ENCODE measurements at regions of chr13 and their contacts with region 1.

Region 1: DNA sequence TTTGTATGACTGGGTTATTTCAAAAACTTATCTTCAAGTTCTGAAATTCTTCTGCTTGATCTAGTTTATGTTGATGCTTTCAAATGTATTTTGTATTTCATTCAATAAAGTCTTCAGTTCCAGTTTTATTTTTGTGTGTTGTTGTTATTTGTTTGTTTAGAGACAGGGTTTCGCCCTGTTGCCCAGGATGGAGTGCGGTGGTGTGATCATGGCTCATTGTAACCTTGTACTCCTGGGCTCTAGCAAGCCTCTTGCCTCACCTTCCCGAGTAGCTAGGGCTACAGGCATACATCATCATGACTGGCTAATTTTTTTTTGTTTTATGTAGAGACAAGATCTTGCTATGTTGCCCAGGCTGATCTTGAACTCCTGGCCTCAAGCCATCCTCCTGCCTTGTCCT is 40.3 kb upstream of the ARHGEF7 start:
- DNase-seq: no peak
- H3K4me3 ChIP-seq: no peak overlapping the region
- H3K27ac ChIP-seq: no peak overlapping the region
- H3K4me1 ChIP-seq: no peaks in the 10 kb centered on the region
- H3K27me3 ChIP-seq: no peaks in the 10 kb centered on the region
- CTCF ChIP-seq: no peak
- POLR2A ChIP-seq: no peak

Region 2: GRCh38 chr13:111219950-111220349 is 145.1 kb after region 1 on chr13:
- intact Hi-C with region 1: loop called (anchors 5 kb)
- DNase-seq: no peak
- H3K4me3 ChIP-seq: no peak overlapping the region
- H3K27ac ChIP-seq: peak overlapping the region in 4 of 8 donors; percentile 4 to 37 (median 11)
- H3K4me1 ChIP-seq: peaks cover 25 to 88% (median 52%) of the 10 kb centered on the region in 6 donors
- H3K27me3 ChIP-seq: no peaks in the 10 kb centered on the region
- CTCF ChIP-seq: no peak
- POLR2A ChIP-seq: no peak

Measured in spleen (tissue), 13 donors.